GM18951 (cell line): ENCODE measurements at regions of chr5 and their contacts with region 1.

Region 1: GRCh38 chr5:33440482-33441240 is at the start of gene TARS1:
- POLR2A ChIP-seq: peak; percentile 86

Region 2: GRCh38 chr5:32174011-32174870 is 1266.4 kb before region 1 on chr5 and contains the start of gene GOLPH3:
- in situ Hi-C with region 1: no loop called
- POLR2A ChIP-seq: peak; percentile 97

Region 3: DNA sequence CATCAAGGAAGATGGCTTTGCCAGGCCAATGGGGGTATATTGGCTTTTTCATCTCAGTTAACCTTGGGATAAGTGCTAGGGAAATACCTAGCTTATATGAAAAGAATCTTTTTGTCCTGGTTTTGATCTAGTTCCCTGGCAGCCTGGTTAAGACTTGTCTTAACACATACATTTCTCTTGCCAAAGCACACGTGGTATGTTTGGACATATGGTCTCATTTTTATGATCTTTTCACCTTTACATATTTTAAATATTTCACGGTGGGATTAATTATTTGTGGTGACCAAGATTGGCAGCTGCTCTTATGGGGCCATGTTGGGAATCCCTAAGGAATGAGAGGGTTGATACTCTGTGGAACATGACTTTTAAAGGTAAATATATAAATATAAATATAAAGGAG is 417.0 kb before region 1 on chr5:
- in situ Hi-C with region 1: no loop called
- POLR2A ChIP-seq: no peak

Region 4: DNA sequence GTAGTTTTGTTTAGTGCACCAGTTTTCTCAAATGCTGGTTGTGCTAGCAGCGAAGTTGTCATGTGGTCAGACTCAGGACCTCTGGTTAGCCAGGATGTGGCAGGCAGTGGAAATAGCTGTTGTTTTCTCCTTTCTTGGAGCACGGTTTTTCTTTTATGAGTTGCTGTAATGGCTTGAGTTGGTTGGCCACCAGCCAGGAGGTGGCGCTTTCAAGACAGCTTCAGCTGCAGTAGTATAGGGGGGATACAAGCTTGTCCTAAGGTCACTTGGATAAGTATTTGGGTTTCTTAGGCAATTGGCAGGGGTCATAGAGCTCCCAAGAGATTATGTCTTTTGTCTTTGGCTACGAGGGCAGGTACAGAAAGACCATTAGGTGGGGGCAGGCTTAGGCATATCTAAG is 274.1 kb before region 1 on chr5:
- in situ Hi-C with region 1: no loop called
- POLR2A ChIP-seq: no peak

Region 5: DNA sequence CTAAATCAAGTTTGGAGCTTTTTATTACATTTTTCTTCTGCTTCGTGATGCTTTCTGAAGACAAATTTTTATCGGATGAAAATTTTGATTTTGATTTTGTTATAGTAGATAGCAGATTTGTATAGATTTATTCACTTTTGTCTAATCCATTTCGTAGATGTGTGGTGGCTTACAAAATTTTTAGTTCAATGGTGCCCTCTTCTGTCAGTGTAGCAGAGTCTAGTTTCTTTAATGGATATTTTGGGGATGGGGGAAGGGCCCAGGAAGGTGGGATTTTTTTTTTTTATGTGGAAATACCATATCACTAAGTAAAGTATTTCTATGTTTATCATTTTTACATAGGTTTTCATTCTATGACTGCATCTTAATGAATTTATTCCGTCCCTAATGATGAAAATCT is 259.8 kb before region 1 on chr5:
- in situ Hi-C with region 1: no loop called
- POLR2A ChIP-seq: no peak

Region 6: DNA sequence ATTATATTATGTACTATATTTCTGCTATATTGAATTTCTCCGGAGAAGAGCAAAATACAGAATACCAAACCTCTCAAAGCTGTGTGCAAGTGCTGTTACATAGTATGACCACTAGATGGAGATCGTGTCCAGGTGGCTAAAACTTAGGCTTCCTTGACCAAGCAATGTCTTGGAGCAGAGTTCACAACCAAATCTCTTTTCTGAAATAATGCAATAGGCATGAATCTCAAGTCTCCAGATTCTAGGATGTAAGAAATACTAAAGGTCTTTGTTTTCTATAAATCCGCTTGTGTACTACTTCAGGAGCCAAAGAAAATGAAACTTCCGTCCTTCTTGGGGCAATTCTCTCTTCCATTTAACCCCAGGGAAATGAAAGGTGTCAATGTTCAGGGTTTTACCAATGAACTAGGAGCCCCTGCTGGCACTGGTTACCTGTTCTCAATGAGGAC is 1033.9 kb after region 1 on chr5:
- in situ Hi-C with region 1: loop called (anchors 25 kb)
- POLR2A ChIP-seq: no peak